AG04450 (cell line): ENCODE measurements at regions of chr6 and their contacts with region 1.

Region 1: DNA sequence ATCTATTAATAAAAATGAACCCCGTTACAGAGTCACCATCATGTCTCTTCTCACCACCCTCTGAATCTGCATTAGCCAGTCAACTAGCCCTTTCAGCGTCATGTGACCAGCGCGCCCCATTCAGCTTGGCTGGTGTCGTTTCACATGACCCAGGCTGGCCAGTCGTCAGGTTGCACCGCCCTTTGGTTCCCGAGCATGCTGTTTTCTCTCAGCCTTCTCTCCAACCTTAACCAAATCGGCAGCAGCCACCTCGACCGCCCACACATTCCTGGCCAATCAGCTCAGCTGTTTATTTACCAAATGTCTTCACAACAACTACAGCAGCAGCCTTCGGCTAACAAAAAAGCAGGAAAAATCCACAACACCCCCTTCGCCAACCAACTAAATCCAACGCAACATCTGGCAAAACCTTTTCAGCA is 5.6 kb downstream of the SRSF3 start:
- DNase-seq: no peak
- H3K4me3 ChIP-seq: peak overlapping the region; percentile 26
- H3K27ac ChIP-seq: no peak overlapping the region
- H3K27me3 ChIP-seq: no peaks in the 10 kb centered on the region
- CTCF ChIP-seq: no peak

Region 2: DNA sequence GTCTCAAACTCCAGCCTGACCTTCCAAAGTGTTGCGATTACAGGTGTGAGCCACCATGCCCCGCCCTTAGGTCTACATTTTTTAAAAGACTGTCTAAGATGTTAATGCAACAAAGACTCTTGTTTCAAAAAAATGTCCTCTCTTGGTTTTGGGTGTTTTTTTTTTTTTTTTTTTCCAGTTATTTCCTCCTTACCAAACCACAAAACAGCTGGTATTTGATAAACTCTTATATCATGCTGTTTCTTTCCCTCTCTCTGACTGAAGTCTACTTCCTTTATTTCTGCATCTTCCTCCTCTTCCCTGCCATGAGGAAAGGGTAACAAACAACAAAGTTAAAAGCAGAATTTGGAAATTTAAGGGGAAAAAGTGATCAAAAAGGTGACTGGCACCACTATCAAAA is 73.7 kb before region 1 on chr6:
- CTCF ChIA-PET with region 1: no interaction called
- POLR2A ChIA-PET with region 1: interaction called, 10 read pairs
- DNase-seq: no peak
- H3K4me3 ChIP-seq: no peak overlapping the region
- H3K27ac ChIP-seq: no peak overlapping the region
- H3K27me3 ChIP-seq: no peaks in the 10 kb centered on the region
- CTCF ChIP-seq: no peak